Activated naive CD4-positive, alpha-beta T cell treated with anti-CD3 and anti-CD28 coated beads for 36 hours (primary cell): ENCODE measurements at regions of chr1 and their contacts with region 1.

Region 1: GRCh38 chr1:20633190-20634064 is at the start of gene PINK1:
- DNase-seq: peak; percentile 86
- H3K4me3 Mint-ChIP-seq: peak within 1 kb of the TSS; percentile 81
- H3K27ac Mint-ChIP-seq: peak within 1 kb of the TSS; percentile 30
- H3K4me1 Mint-ChIP-seq: peaks cover 9% of the 10 kb centered on the region
- H3K27me3 Mint-ChIP-seq: no peaks in the 10 kb centered on the region
- total RNA-seq, gene PINK1: 1.4 to 1.5 TPM

Region 2: DNA sequence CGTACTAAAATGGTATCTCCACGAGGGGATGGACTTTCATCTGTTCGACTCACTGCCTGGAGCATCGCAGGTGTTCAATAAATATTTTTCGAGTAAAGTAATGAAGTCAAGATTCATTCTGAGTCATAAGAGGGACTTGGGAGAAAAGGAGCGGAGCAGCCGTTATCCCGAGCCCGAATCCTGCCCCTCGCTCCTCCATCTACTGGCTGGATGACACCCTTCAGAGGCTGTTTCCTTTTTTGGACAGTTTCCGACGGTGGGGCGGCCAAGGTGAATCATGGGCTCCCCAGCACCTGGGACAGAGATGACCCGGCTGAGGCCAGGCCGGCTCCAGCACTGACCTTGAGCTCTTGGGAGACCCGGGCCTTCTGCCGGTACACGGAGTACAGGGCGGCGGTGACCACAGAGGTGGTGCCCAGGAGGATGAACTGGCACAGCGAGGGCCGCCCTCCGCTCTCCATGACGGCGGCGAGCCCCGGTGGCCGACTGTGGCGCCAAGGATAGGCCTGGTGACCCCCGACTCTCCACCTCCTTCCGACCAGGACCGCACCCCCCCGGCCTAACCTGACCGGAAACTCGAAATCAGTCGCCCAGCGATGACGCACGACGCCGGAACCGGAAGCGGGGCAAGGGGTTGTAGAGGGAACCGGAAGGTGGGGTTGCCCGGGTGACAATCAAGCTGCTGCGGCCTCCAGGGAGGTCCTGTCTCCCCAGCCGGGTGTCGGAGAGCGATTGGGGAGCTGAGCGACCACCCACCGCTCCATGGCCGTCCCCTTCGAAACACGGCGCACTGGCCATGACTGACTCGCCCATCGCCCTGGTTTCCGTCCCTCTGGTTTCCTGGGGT is 125.6 kb before region 1 on chr1 and contains the start of gene MUL1:
- CTCF ChIA-PET with region 1: no interaction called
- intact Hi-C with region 1: loop called (anchors 1 kb)
- DNase-seq: peak; percentile 97
- H3K4me3 Mint-ChIP-seq: peak within 1 kb of the TSS; percentile 91
- H3K27ac Mint-ChIP-seq: peak within 1 kb of the TSS; percentile 83
- H3K4me1 Mint-ChIP-seq: peaks cover 21% of the 10 kb centered on the region
- H3K27me3 Mint-ChIP-seq: peaks cover under 1% of the 10 kb centered on the region
- total RNA-seq, gene MUL1: 10.9 to 12.1 TPM

Region 3: GRCh38 chr1:20521960-20522861 is 111.2 kb before region 1 on chr1:
- CTCF ChIA-PET with region 1: interaction called, 28 read pairs
- intact Hi-C with region 1: no loop called
- DNase-seq: peak; percentile 84
- H3K4me3 Mint-ChIP-seq: no peak overlapping the region
- H3K27ac Mint-ChIP-seq: no peak overlapping the region
- H3K4me1 Mint-ChIP-seq: no peaks in the 10 kb centered on the region
- H3K27me3 Mint-ChIP-seq: peaks cover 3% of the 10 kb centered on the region

Region 4: GRCh38 chr1:20574686-20575540 is 58.5 kb before region 1 on chr1:
- CTCF ChIA-PET with region 1: interaction called, 6 read pairs
- intact Hi-C with region 1: loop called (anchors 1 kb)
- DNase-seq: peak; percentile 88
- H3K4me3 Mint-ChIP-seq: no peak overlapping the region
- H3K27ac Mint-ChIP-seq: no peak overlapping the region
- H3K4me1 Mint-ChIP-seq: no peaks in the 10 kb centered on the region
- H3K27me3 Mint-ChIP-seq: peaks cover 12% of the 10 kb centered on the region

Region 5: GRCh38 chr1:20661207-20662109 is 28.0 kb after region 1 on chr1 and contains the start of gene DDOST:
- CTCF ChIA-PET with region 1: interaction called, 5 read pairs
- intact Hi-C with region 1: loop called (anchors 1 kb)
- DNase-seq: peak; percentile 97
- H3K4me3 Mint-ChIP-seq: peak within 1 kb of the TSS; percentile 99
- H3K27ac Mint-ChIP-seq: peak within 1 kb of the TSS; percentile 99
- H3K4me1 Mint-ChIP-seq: peaks cover 50% of the 10 kb centered on the region
- H3K27me3 Mint-ChIP-seq: no peaks in the 10 kb centered on the region
- total RNA-seq, gene DDOST: 167 to 169 TPM

Region 6: DNA sequence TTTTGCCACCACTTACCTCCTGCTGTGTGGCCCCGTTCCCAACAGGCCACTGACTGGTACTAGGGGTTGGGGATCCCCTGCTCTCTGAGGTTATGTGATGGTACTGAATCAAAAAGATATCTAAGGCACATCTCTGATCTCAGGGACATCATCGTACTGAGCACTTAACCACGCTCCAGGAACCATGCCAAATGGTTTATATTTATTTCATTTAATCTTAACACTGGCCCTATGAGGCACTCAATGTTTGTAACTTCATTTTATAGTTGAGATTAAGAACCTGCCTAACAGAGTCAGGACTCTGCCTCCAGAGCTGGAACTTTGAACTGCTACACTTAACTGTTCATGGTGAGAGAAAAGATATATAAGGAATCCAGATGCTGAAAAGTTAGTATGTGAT is 251.7 kb after region 1 on chr1:
- CTCF ChIA-PET with region 1: no interaction called
- intact Hi-C with region 1: no loop called
- DNase-seq: no peak
- H3K4me3 Mint-ChIP-seq: no peak overlapping the region
- H3K27ac Mint-ChIP-seq: no peak overlapping the region
- H3K4me1 Mint-ChIP-seq: peaks cover 3% of the 10 kb centered on the region
- H3K27me3 Mint-ChIP-seq: no peaks in the 10 kb centered on the region